GM10248 (cell line): ENCODE measurements at regions of chr5 and their contacts with region 1.

Region 1: GRCh38 chr5:80083101-80083890 is 48.1 kb downstream of the THBS4 start:
- DNase-seq: peak; percentile 73
- CTCF ChIP-seq: peak; percentile 66

Region 2: GRCh38 chr5:80043187-80043586 is 40.1 kb before region 1 on chr5:
- CTCF ChIA-PET with region 1: interaction called, 11 read pairs
- POLR2A ChIA-PET with region 1: no interaction called
- DNase-seq: no peak
- CTCF ChIP-seq: no peak

Region 3: DNA sequence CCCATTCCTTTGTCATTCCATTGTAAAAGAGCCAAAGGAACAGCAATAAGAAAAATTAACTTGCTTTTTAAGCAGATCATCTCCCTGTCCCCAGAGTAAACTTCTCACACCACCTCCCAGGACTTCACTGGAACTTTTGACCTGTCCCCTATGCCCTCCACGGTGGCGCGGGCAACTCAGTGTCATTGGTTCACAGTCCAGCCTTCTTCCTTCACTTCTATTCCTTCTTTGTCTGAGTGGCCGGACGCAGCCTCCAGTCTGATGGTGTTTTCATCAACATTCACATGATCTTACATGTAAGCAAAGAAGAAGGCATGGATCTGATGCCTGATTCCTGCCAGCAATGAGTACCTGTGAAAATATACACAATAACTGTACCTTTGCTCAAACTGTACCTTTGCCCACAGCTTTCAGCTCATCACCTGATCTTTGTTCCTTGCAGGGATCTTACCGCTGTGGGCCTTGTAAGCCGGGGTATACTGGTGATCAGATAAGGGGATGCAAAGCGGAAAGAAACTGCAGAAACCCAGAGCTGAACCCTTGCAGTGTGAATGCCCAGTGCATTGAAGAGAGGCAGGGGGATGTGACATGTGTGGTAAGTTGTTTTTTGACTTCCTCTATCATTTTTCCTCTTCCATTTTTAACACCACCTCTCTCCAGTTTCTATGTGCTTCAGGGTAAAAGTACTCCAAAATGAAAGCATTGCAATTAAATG is 15.6 kb before region 1 on chr5:
- CTCF ChIA-PET with region 1: interaction called, 17 read pairs
- POLR2A ChIA-PET with region 1: no interaction called
- DNase-seq: no peak
- CTCF ChIP-seq: no peak

Region 4: GRCh38 chr5:80101993-80102392 is 18.7 kb after region 1 on chr5:
- CTCF ChIA-PET with region 1: interaction called, 84 read pairs
- POLR2A ChIA-PET with region 1: no interaction called
- DNase-seq: no peak
- CTCF ChIP-seq: no peak